Pancreas (tissue), 10 donors: ENCODE measurements at regions of chr19 and their contacts with region 1.

Region 1: GRCh38 chr19:28466107-28467045 is 746.6 kb downstream of the UQCRFS1 start:
- DNase-seq: peak in 5 of 6 donors; percentile 49 to 82 (median 68)
- ATAC-seq: peak; percentile 34 to 79 (median 71)
- H3K4me3 ChIP-seq: no peak overlapping the region
- H3K27ac ChIP-seq: peak overlapping the region in 1 of 4 donors; percentile 9
- H3K4me1 ChIP-seq: no peaks in the 10 kb centered on the region
- H3K27me3 ChIP-seq: no peaks in the 10 kb centered on the region
- CTCF ChIP-seq: peak; percentile 71 to 80 (median 76)

Region 2: DNA sequence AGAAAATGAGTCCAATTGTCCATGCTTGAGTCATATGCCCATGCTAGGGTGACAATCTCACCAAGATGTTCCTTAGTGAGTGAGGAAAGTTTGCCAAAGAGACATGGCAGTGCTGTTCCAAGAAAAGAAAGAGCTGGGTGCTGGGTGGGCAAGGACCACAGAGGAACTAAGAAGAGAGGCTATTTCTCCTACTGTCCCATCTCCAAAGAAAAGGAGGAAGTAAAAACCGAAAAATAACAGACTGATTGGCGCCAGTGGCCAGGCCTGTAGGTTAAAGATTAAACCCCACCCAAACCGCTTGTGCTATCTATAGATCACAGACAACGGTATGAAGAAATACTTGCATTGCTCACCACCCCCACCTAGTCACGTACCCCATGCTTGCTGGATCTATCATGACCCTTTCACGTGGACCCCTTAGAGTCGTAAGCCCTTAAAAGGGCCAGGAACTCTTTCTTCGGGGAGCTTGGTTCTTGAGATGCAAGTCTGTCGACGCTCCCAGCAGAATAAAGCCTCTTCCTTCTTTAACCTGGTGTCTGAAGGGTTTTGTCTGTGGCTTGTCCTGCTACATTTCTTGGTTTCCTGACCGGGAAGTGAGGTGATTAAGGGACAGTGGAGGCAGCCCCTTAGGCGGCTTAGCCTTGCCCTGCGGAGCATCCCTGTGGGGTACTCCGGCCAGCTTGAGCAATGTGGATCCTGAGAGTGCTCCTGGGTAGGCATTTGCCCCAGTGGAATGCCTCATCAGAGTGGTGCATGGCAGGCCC is 140.1 kb after region 1 on chr19:
- intact Hi-C with region 1: no loop called
- DNase-seq: no peak
- ATAC-seq: peak in 1 of 4 donors; percentile 29
- H3K4me3 ChIP-seq: no peak overlapping the region
- H3K27ac ChIP-seq: peak overlapping the region in 2 of 4 donors; percentile 42 to 53
- H3K4me1 ChIP-seq: no peaks in the 10 kb centered on the region
- H3K27me3 ChIP-seq: no peaks in the 10 kb centered on the region
- CTCF ChIP-seq: no peak

Region 3: DNA sequence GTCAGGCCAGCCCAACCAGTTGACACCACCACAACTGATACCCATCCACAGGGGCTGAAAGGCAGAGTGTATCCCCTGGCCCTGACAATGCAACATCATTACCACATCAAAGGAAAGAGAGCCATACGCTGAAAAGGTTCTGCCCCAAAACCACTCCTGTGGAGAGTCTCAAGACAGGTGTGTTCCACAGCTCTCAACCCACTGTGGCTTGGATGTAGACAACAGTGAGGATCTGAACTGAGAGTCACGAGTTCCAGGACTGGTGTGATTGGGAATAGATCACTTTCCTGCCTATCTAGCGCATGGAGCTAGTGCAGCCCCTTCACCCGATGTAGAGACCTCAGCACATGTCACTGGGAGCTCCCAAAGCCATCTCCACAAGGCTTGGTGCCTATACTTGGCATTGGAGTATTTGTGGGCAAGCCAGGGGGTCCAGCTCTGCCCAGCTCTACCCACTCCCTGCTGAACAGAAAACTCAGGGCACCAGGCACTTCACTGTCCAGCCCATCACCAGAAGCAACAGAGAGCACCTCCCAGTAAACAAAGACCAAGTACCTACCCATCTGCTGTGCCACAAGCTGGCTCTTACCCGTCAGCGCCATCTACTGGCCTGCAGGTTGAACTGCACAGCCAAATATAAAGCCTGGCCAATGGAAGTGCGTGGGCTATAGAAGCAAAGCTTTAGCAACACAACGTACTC is 167.1 kb after region 1 on chr19:
- intact Hi-C with region 1: loop called in 2 of 3 experiments (anchors 10 kb)
- DNase-seq: peak in 2 of 6 donors; percentile 40 to 45
- ATAC-seq: peak in 3 of 4 donors; percentile 74 to 87 (median 83)
- H3K4me3 ChIP-seq: no peak overlapping the region
- H3K27ac ChIP-seq: no peak overlapping the region
- H3K4me1 ChIP-seq: no peaks in the 10 kb centered on the region
- H3K27me3 ChIP-seq: no peaks in the 10 kb centered on the region
- CTCF ChIP-seq: peak; percentile 65 to 73 (median 69)

Region 4: DNA sequence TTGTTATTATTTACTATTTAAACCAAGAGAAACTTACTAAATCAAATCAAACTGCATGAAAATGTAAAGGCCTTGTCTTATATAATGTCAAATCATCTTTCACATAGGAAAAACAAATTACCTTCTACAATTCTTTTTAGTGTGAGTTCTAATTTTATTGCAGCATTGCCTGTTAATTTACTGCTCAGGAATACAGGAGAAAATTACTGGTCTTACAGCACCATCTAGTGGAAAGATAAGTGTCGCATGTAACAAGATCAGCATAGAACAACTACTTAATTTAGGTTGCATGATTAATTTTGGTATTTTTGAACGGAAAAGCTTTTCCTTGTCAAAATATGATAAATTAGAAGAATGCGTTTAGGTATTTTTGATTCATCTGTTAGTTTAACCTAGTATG is 243.9 kb after region 1 on chr19:
- intact Hi-C with region 1: loop called in 1 of 3 experiments (anchors 5 kb)
- DNase-seq: no peak
- ATAC-seq: peak in 3 of 4 donors; percentile 67 to 71 (median 67)
- H3K4me3 ChIP-seq: no peak overlapping the region
- H3K27ac ChIP-seq: no peak overlapping the region
- H3K4me1 ChIP-seq: no peaks in the 10 kb centered on the region
- H3K27me3 ChIP-seq: no peaks in the 10 kb centered on the region
- CTCF ChIP-seq: peak; percentile 35 to 60 (median 53)

Region 5: DNA sequence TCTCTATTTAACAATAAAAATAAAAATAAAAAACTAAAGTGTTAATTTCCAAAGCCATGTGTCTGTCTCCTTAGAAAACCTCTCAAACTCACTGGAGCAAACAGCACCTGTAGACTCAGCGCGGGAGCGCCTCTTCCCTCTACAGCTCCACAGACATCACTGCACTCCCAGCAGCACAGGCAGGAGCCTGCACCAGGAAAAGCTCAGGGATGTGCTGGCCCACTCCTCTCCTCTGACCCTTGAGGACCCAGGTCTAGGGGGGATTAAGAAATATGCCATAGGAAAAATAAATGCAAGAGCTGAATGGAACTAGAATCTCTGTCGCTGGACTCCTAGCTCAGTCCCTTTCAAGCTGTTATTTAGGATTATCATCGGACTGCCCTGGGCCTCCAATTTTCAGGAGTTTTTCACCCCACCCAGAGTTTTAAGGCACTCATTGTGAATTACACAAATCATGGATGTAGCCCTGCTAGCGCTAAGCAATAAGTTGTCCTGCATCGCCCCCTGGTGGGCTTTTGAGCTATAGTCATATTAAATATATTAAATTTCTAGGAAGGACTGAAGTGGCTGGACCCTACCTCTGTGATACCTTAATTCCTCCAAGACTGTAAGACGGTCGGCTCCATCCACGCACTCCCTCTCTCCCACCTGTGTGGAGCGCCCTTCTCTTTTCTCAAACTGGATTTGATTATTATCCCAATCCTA is 412.6 kb after region 1 on chr19:
- intact Hi-C with region 1: loop called in 1 of 3 experiments (anchors 10 kb)
- DNase-seq: peak in 5 of 6 donors; percentile 40 to 85 (median 67)
- ATAC-seq: peak; percentile 43 to 89 (median 76)
- H3K4me3 ChIP-seq: no peak overlapping the region
- H3K27ac ChIP-seq: no peak overlapping the region
- H3K4me1 ChIP-seq: no peaks in the 10 kb centered on the region
- H3K27me3 ChIP-seq: no peaks in the 10 kb centered on the region
- CTCF ChIP-seq: peak; percentile 36 to 74 (median 54)